ENCODE measurements at regions of chr11 and their contacts with region 1.

Region 1: GRCh38 chr11:124961972-124962609 is 8.1 kb downstream of the CCDC15 start:
- DNase-seq: peak in 1 of 2 experiments; percentile 76
- H3K4me3 ChIP-seq: no peak overlapping the region
- H3K4me3 Mint-ChIP-seq: no peak overlapping the region
- H3K27ac Mint-ChIP-seq: no peak overlapping the region
- H3K4me1 ChIP-seq: no peaks in the 10 kb centered on the region
- H3K4me1 Mint-ChIP-seq: no peaks in the 10 kb centered on the region
- H3K27me3 ChIP-seq: no peaks in the 10 kb centered on the region
- H3K27me3 Mint-ChIP-seq: peaks cover 4% of the 10 kb centered on the region
- CTCF ChIP-seq: peak; percentile 86 to 90

Region 2: DNA sequence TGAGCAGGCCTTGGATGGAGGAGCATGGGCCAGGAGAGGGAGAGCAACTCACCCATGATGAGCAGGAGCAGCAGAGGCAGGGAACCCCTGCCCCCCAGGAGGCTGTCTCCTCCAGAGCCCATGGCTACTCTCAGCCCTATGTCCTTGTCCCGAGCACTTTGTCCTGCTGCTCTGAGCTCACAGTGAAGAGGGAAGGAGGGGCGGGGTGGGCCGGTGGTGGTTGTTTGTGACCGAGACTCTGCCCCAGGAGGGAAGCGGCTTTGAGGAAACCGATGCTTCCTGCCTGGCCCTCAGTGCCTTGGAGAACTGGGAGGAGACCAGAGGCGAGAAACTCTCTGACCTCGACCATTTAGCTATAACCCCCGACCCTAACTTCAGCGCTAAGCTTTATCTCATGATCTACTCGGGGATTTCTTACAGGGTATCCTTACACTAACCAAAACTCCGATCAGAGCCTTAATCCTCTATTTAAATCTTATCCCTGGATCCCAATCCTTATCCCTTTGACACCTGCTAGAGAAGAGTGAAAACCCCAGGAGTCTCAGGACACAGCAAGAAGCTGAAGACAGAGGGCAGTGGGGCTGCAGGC is 64.3 kb before region 1 on chr11 and contains the start of gene ROBO4:
- CTCF ChIA-PET with region 1: no interaction called
- POLR2A ChIA-PET with region 1: no interaction called
- intact Hi-C with region 1: no loop called
- DNase-seq: no peak
- H3K4me3 ChIP-seq: no peak within 1 kb of the TSS
- H3K4me3 Mint-ChIP-seq: no peak within 1 kb of the TSS
- H3K27ac Mint-ChIP-seq: no peak within 1 kb of the TSS
- H3K4me1 ChIP-seq: no peaks in the 10 kb centered on the region
- H3K4me1 Mint-ChIP-seq: no peaks in the 10 kb centered on the region
- H3K27me3 ChIP-seq: peaks cover 6% of the 10 kb centered on the region
- H3K27me3 Mint-ChIP-seq: peaks cover 17% of the 10 kb centered on the region
- CTCF ChIP-seq: no peak
- total RNA-seq, gene ROBO4: not detected in 2 replicates

Region 3: DNA sequence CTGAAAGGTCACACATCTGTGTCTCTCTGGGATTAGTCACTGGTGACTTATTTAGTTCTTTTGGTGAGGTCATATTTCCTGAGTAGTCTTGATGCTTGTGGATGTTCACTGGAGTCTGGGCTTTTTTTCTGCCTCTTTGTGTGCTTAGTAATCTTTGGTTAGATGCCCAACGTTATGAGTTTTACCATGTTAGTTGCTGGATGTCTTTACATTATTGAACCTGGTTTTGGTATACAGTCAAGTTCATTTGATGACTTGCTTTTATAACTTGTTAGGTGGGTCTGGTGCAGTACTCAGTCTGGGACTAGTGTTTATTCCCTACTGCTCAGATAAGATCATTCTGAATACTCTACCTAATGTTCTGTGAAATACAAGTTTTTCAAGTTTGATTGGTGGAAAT is 74.8 kb after region 1 on chr11:
- CTCF ChIA-PET with region 1: no interaction called
- POLR2A ChIA-PET with region 1: no interaction called
- intact Hi-C with region 1: no loop called
- DNase-seq: no peak
- H3K4me3 ChIP-seq: no peak overlapping the region
- H3K4me3 Mint-ChIP-seq: no peak overlapping the region
- H3K27ac Mint-ChIP-seq: no peak overlapping the region
- H3K4me1 ChIP-seq: no peaks in the 10 kb centered on the region
- H3K4me1 Mint-ChIP-seq: no peaks in the 10 kb centered on the region
- H3K27me3 ChIP-seq: no peaks in the 10 kb centered on the region
- H3K27me3 Mint-ChIP-seq: no peaks in the 10 kb centered on the region
- CTCF ChIP-seq: no peak

Region 4: GRCh38 chr11:125062931-125063428 is 100.9 kb after region 1 on chr11 and contains the start of gene SLC37A2:
- CTCF ChIA-PET with region 1: no interaction called
- POLR2A ChIA-PET with region 1: no interaction called
- intact Hi-C with region 1: loop called (anchors 5 kb)
- DNase-seq: peak; percentile 76 to 89
- H3K4me3 ChIP-seq: peak within 1 kb of the TSS; percentile 56
- H3K4me3 Mint-ChIP-seq: peak within 1 kb of the TSS; percentile 84
- H3K27ac Mint-ChIP-seq: peak within 1 kb of the TSS; percentile 39
- H3K4me1 ChIP-seq: peaks cover 14% of the 10 kb centered on the region
- H3K4me1 Mint-ChIP-seq: peaks cover 8% of the 10 kb centered on the region
- H3K27me3 ChIP-seq: no peaks in the 10 kb centered on the region
- H3K27me3 Mint-ChIP-seq: peaks cover 3% of the 10 kb centered on the region
- CTCF ChIP-seq: peak; percentile 44 to 56
- total RNA-seq, gene SLC37A2: 11.4 and 13.8 TPM in 2 replicates

Region 5: GRCh38 chr11:125123947-125124617 is 162.0 kb after region 1 on chr11:
- CTCF ChIA-PET with region 1: no interaction called
- POLR2A ChIA-PET with region 1: no interaction called
- intact Hi-C with region 1: loop called (anchors 5 kb)
- DNase-seq: peak; percentile 74 to 77
- H3K4me3 ChIP-seq: peak overlapping the region; percentile 5
- H3K4me3 Mint-ChIP-seq: peak overlapping the region; percentile 55
- H3K27ac Mint-ChIP-seq: peak overlapping the region; percentile 76
- H3K4me1 ChIP-seq: peaks cover 28% of the 10 kb centered on the region
- H3K4me1 Mint-ChIP-seq: peaks cover 32% of the 10 kb centered on the region
- H3K27me3 ChIP-seq: no peaks in the 10 kb centered on the region
- H3K27me3 Mint-ChIP-seq: peaks cover 5% of the 10 kb centered on the region
- CTCF ChIP-seq: peak; percentile 67 to 80

Region 6: DNA sequence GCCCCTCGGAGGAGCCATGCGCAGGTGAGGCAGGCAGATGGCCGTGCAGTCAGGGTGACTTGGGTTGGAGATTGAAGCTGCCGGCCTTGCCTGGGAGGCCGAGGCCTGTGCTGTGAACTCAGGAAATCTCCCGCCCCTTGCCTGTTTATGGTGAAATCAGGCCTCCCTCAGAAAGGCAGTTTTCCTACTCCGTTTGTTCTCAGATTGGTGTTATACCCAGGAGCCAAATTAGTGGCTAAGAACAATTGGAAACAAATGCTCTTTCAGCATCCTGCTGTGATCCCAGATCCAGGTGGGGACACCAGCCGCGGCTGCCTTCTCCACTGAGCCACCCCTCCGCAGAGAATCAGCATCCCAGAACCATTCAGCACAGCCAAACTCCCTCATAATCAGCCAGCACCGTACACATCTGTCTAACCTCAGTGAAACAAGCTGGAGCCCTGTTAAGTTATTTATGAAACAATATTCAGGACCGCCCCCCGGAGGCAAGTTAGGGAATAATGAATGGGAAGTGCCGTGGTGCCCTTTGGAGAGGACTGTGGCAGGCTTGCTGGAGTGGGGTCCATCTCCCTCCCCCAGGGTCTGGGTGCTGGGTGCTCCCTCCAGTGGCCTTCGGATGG is 262.4 kb after region 1 on chr11:
- CTCF ChIA-PET with region 1: no interaction called
- POLR2A ChIA-PET with region 1: no interaction called
- intact Hi-C with region 1: loop called (anchors 10 kb)
- DNase-seq: peak in 1 of 2 experiments; percentile 46
- H3K4me3 ChIP-seq: no peak overlapping the region
- H3K4me3 Mint-ChIP-seq: no peak overlapping the region
- H3K27ac Mint-ChIP-seq: no peak overlapping the region
- H3K4me1 ChIP-seq: no peaks in the 10 kb centered on the region
- H3K4me1 Mint-ChIP-seq: no peaks in the 10 kb centered on the region
- H3K27me3 ChIP-seq: peaks cover 2% of the 10 kb centered on the region
- H3K27me3 Mint-ChIP-seq: peaks cover 27% of the 10 kb centered on the region
- CTCF ChIP-seq: peak in 1 of 2 experiments; percentile 38

Region 7: DNA sequence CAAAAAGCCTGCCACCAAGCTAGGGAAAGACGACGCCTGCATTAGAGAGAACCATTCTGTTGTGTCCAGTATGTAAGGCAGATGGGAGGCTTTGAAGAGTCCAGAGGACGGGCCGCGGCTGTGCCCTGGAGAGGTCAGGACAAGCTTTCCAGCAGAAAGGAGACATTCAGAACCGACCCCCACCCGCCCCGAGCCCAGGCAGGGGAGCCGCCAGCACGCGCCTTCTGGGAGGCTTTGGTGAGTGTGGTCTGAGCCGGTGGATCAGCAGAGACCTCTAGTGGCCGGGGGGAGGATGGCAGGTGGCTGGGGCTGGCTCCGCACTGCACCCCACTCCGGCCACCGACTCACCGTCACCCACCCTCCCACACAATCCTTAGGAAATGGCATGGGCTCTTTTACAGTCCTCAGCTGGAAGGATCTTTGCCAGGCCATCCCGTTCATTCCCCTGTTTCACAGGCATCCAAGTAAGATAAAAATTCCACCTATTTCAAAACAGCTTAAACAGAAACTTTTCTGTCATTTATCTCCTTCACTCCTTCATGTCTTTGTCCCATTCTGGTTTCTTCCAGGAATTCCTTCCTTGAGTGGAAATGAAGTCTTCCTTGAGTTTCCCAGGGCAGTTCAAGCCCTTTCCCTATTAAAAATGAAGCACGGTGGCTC is 442.8 kb after region 1 on chr11:
- CTCF ChIA-PET with region 1: no interaction called
- POLR2A ChIA-PET with region 1: no interaction called
- intact Hi-C with region 1: loop called (anchors 1 kb)
- DNase-seq: peak; percentile 74 to 90
- H3K4me3 ChIP-seq: no peak overlapping the region
- H3K4me3 Mint-ChIP-seq: no peak overlapping the region
- H3K27ac Mint-ChIP-seq: no peak overlapping the region
- H3K4me1 ChIP-seq: no peaks in the 10 kb centered on the region
- H3K4me1 Mint-ChIP-seq: no peaks in the 10 kb centered on the region
- H3K27me3 ChIP-seq: peaks cover 5% of the 10 kb centered on the region
- H3K27me3 Mint-ChIP-seq: peaks cover 48% of the 10 kb centered on the region
- CTCF ChIP-seq: peak; percentile 99

Region 8: DNA sequence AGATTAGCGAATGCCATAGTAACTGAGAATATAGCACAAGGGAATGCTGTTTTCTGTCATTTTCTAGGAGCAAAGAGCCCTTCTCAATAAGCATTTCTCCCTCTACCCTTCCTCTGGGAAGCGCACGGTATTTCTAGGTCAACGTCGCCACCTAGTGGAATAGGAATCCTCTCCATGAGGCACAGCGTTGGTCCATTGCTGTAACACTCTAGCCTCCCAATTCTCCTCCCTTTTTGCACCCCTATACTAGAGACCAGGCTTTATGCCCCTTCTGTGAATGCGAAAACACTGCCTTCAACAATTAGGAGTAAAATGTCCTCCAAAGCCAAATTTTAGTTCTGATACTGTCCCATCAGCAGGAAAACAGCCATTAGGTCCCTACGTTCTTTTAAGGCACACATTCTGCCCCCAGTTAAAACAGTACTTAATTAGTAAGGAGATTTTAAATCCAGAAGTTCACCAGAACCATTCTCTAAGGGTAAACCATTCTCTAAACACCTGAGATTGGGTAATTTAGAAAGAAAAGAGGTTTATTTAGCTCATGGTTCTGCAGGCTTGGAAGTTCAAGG is 912.5 kb after region 1 on chr11:
- CTCF ChIA-PET with region 1: no interaction called
- POLR2A ChIA-PET with region 1: no interaction called
- intact Hi-C with region 1: loop called (anchors 2 kb)
- DNase-seq: peak; percentile 78 to 82
- H3K4me3 ChIP-seq: no peak overlapping the region
- H3K4me3 Mint-ChIP-seq: no peak overlapping the region
- H3K27ac Mint-ChIP-seq: no peak overlapping the region
- H3K4me1 ChIP-seq: no peaks in the 10 kb centered on the region
- H3K4me1 Mint-ChIP-seq: peaks cover 7% of the 10 kb centered on the region
- H3K27me3 ChIP-seq: no peaks in the 10 kb centered on the region
- H3K27me3 Mint-ChIP-seq: peaks cover 3% of the 10 kb centered on the region
- CTCF ChIP-seq: peak; percentile 93 to 97

Region 9: GRCh38 chr11:125941619-125942611 is 979.8 kb after region 1 on chr11:
- CTCF ChIA-PET with region 1: no interaction called
- POLR2A ChIA-PET with region 1: no interaction called
- intact Hi-C with region 1: no loop called
- DNase-seq: peak; percentile 74 to 78
- H3K4me3 ChIP-seq: no peak overlapping the region
- H3K4me3 Mint-ChIP-seq: no peak overlapping the region
- H3K27ac Mint-ChIP-seq: no peak overlapping the region
- H3K4me1 ChIP-seq: no peaks in the 10 kb centered on the region
- H3K4me1 Mint-ChIP-seq: peaks cover 5% of the 10 kb centered on the region
- H3K27me3 ChIP-seq: 0 out of 2 replicates have a peak, but pooled peaks cover 1% of the 10 kb centered on the region
- H3K27me3 Mint-ChIP-seq: peaks cover 6% of the 10 kb centered on the region
- CTCF ChIP-seq: peak; percentile 81 to 97